ENCODE measurements at regions of chr17 and their contacts with region 1.

Region 1: DNA sequence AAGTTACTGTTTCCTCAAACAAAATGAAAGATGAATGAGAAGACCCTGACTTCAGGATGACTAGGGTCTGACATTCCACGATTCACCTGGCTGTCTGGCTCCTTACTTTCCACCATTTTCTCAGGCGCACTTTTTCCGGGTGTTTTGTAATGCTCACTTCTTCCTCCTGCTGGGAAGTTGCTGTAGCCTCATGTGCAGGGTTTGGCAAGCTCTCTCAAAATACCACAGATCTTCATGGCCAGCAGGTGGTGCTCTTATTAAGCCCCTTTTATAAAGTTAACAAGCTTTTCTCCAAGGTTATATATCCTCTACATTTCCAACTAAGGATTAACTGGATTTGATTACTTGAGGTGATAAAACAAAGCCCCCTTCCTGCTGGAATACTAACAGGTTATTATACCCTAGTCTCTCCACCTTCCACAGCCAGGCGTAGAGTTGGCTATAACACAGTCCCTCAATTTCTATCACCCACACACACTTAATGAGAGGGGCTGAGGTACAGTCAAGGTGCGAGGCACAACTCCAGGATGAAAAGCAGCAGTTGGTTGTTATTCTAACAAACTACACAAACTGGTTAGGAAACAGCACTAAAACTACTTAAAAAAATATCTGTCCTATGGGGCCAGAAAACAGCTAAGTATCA is 45.4 kb downstream of the STH start:
- DNase-seq: peak; percentile 42
- ATAC-seq: peak; percentile 86
- H3K4me3 ChIP-seq: no peak overlapping the region
- H3K27ac ChIP-seq: no peak overlapping the region
- H3K4me1 ChIP-seq: no peaks in the 10 kb centered on the region; the same call in 1 of the 2 replicates
- H3K27me3 ChIP-seq: no peaks in the 10 kb centered on the region
- CTCF ChIP-seq: peak; percentile 81

Region 2: GRCh38 chr17:45894022-45894784 is 150.2 kb before region 1 on chr17 and contains the start of gene MAPT:
- CTCF ChIA-PET with region 1: no interaction called
- POLR2A ChIA-PET with region 1: no interaction called
- in situ Hi-C with region 1: no loop called
- intact Hi-C with region 1: no loop called
- DNase-seq: peak; percentile 69
- ATAC-seq: peak; percentile 96
- H3K4me3 ChIP-seq: peak within 1 kb of the TSS; percentile 55 to 59
- H3K27ac ChIP-seq: peak within 1 kb of the TSS; percentile 88
- H3K4me1 ChIP-seq: no peaks in the 10 kb centered on the region
- H3K27me3 ChIP-seq: no peaks in the 10 kb centered on the region
- CTCF ChIP-seq: peak; percentile 97
- total RNA-seq, gene MAPT: 0.59 TPM

Region 3: DNA sequence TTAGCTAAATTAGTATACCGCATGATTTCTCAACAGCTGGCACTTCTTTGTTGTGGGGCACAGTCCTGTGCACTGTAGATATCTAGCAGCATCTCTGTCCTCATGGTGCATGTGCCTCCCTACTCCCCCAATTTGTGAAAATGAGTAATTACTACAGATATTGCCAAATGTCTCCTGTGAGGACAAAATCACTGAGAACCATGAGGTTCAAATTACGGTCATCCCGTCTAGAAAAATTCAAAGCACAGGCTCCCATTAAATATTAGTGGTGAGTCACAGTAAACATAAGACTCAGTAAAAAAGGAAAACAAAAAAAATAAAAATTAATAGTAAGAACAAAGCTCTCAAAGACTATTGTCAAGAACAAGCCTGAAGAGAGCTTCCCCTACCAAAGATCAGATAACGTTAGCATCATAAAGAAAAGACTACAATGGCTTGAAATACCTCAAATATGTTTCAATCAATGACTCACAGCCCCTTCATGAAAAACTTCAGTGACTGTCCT is 12.4 kb after region 1 on chr17:
- CTCF ChIA-PET with region 1: interaction called, 14 read pairs
- POLR2A ChIA-PET with region 1: no interaction called
- in situ Hi-C with region 1: no loop called
- intact Hi-C with region 1: no loop called
- DNase-seq: no peak
- ATAC-seq: no peak
- H3K4me3 ChIP-seq: no peak overlapping the region
- H3K27ac ChIP-seq: no peak overlapping the region
- H3K4me1 ChIP-seq: no peaks in the 10 kb centered on the region
- H3K27me3 ChIP-seq: no peaks in the 10 kb centered on the region
- CTCF ChIP-seq: no peak

Measured in Panc1 (cell line).